ENCODE measurements at regions of chr9 and their contacts with region 1.

Region 1: DNA sequence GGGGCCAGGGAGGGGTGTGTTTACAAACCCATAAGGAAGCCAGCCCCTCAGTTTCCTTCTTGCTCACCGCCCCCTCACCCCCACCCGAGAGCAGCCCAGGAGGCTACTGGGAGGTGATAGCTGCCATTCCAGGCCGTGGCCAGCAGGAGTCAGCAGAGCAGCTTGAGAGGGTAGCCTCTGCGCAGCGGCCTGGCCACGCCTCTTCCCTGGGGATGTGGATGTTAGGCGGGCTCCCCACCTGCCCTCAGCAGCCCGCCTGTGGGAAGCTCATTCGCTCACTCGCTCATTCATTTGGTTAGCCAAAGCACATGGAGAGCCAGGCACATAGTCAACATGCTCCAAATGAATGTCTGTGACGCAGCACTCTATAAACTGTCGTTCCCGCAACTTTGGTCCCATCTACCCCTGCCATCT is 6.1 kb upstream of the DPM2 start:
- DNase-seq: peak; percentile 91
- ATAC-seq: peak; percentile 87
- H3K4me3 Mint-ChIP-seq: no peak overlapping the region
- H3K27ac Mint-ChIP-seq: peak overlapping the region; percentile 81
- H3K4me1 Mint-ChIP-seq: peaks cover 23% of the 10 kb centered on the region
- H3K27me3 Mint-ChIP-seq: no peaks in the 10 kb centered on the region

Region 2: GRCh38 chr9:127897218-127898211 is 46.2 kb before region 1 on chr9:
- CTCF ChIA-PET with region 1: no interaction called
- POLR2A ChIA-PET with region 1: no interaction called
- intact Hi-C with region 1: no loop called
- DNase-seq: peak; percentile 67
- ATAC-seq: no peak
- H3K4me3 Mint-ChIP-seq: peak overlapping the region; percentile 82
- H3K27ac Mint-ChIP-seq: no peak overlapping the region
- H3K4me1 Mint-ChIP-seq: peaks cover 27% of the 10 kb centered on the region
- H3K27me3 Mint-ChIP-seq: no peaks in the 10 kb centered on the region

Region 3: DNA sequence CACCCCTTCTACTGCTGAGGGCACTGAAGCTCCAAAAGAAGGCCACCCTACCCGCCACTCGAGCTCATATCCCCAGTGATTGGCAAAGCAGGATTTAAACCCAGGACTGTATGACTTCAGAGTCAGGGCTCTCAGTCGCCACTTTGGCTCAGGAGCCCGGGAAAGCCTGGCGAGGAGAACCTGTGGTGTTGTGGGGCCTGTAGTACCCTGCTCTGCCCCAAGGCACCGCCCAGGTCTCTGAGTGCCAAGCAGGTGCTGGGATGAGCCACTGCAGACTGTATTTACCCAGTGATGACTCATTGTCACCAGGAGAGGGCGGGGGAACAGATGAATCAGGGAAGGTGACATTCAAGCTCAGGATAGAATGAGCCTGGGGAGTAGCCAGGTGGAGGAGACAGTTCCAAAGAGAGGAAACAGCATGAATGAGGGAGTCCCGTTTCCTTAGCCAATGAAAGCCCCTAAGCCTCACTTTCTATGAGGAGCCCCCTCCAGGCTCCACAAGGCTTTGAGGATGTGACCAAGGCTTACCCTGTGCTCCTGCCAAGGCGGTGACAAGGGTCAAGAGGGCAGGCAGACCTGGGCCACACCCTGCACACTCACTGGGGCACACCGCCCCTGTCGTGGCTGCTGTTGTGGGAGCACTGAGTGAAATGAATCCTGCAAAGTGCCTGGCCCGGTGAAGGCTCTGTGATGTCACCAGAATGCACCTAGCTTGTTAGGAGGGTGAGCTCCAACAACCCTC is 11.7 kb after region 1 on chr9:
- CTCF ChIA-PET with region 1: interaction called, 79 read pairs
- POLR2A ChIA-PET with region 1: interaction called, 4 read pairs
- intact Hi-C with region 1: no loop called
- DNase-seq: peak; percentile 95
- ATAC-seq: peak; percentile 91
- H3K4me3 Mint-ChIP-seq: peak overlapping the region; percentile 51
- H3K27ac Mint-ChIP-seq: peak overlapping the region; percentile 87
- H3K4me1 Mint-ChIP-seq: peaks cover 89% of the 10 kb centered on the region
- H3K27me3 Mint-ChIP-seq: no peaks in the 10 kb centered on the region

Region 4: DNA sequence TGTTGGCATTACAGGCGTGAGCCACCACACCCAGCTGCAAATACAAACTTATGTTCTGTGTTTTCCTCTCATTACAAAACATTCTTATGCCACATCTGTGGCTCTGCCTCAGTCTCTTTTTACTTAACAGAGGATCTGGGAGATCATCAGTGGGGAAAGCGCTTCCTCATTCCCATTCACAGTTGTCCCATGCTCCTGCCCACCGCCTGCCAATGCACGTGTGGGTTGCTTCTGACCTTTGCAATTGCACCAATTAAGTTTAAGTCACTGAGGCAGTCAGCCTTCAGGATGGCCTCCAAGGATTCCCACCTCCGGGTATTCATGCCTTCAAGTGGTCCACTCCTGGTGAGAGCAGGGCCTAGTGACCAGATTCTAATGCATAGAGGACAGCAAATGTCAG is 72.0 kb after region 1 on chr9:
- CTCF ChIA-PET with region 1: no interaction called
- POLR2A ChIA-PET with region 1: no interaction called
- intact Hi-C with region 1: no loop called
- DNase-seq: no peak
- ATAC-seq: no peak
- H3K4me3 Mint-ChIP-seq: no peak overlapping the region
- H3K27ac Mint-ChIP-seq: no peak overlapping the region
- H3K4me1 Mint-ChIP-seq: peaks cover 14% of the 10 kb centered on the region
- H3K27me3 Mint-ChIP-seq: no peaks in the 10 kb centered on the region

Region 5: GRCh38 chr9:128026773-128027541 is 83.2 kb after region 1 on chr9:
- CTCF ChIA-PET with region 1: interaction called, 24 read pairs
- POLR2A ChIA-PET with region 1: interaction called, 3 read pairs
- intact Hi-C with region 1: no loop called
- DNase-seq: peak; percentile 79
- ATAC-seq: peak; percentile 62
- H3K4me3 Mint-ChIP-seq: peak overlapping the region; percentile 65
- H3K27ac Mint-ChIP-seq: peak overlapping the region; percentile 94
- H3K4me1 Mint-ChIP-seq: peaks cover 91% of the 10 kb centered on the region
- H3K27me3 Mint-ChIP-seq: peaks cover 2% of the 10 kb centered on the region

Region 6: DNA sequence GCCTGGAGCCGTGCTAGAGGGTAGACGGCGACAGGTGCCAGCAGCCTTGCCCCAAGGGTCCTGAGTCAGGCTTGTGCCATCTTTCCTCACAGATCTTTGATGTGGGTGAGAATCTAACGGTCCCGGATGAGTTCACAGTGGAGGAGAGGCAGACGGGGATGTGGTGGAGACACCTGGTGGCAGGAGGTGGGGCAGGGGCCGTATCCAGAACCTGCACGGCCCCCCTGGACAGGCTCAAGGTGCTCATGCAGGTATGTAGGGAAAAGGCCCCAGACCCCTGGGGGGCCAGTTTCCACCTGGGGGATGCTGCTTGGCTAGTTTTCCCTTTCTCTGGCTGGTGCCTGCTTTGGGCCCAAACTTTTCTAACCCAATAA is 159.8 kb after region 1 on chr9:
- CTCF ChIA-PET with region 1: interaction called, 5 read pairs
- POLR2A ChIA-PET with region 1: no interaction called
- intact Hi-C with region 1: loop called in 1 of 2 experiments (anchors 5 kb)
- DNase-seq: peak; percentile 69
- ATAC-seq: peak; percentile 89
- H3K4me3 Mint-ChIP-seq: no peak overlapping the region
- H3K27ac Mint-ChIP-seq: peak overlapping the region; percentile 59
- H3K4me1 Mint-ChIP-seq: peaks cover 33% of the 10 kb centered on the region
- H3K27me3 Mint-ChIP-seq: no peaks in the 10 kb centered on the region